AG04450 (cell line): ENCODE measurements at regions of chr3 and their contacts with region 1.

Region 1: GRCh38 chr3:47989981-47990440 is 26.2 kb downstream of the MAP4 start:
- DNase-seq: peak; percentile 88
- H3K4me3 ChIP-seq: no peak overlapping the region
- H3K27ac ChIP-seq: no peak overlapping the region
- H3K27me3 ChIP-seq: no peaks in the 10 kb centered on the region
- CTCF ChIP-seq: peak; percentile 89

Region 2: GRCh38 chr3:47971081-47971480 is 18.9 kb before region 1 on chr3:
- CTCF ChIA-PET with region 1: interaction called, 11 read pairs
- POLR2A ChIA-PET with region 1: no interaction called
- DNase-seq: no peak
- H3K4me3 ChIP-seq: no peak overlapping the region
- H3K27ac ChIP-seq: no peak overlapping the region
- H3K27me3 ChIP-seq: no peaks in the 10 kb centered on the region
- CTCF ChIP-seq: no peak

Region 3: GRCh38 chr3:48001991-48002390 is 12.0 kb after region 1 on chr3:
- CTCF ChIA-PET with region 1: interaction called, 42 read pairs
- POLR2A ChIA-PET with region 1: no interaction called
- DNase-seq: no peak
- H3K4me3 ChIP-seq: no peak overlapping the region
- H3K27ac ChIP-seq: no peak overlapping the region
- H3K27me3 ChIP-seq: no peaks in the 10 kb centered on the region
- CTCF ChIP-seq: no peak

Region 4: GRCh38 chr3:48151058-48151806 is 161.2 kb after region 1 on chr3:
- CTCF ChIA-PET with region 1: interaction called, 24 read pairs
- POLR2A ChIA-PET with region 1: no interaction called
- DNase-seq: peak; percentile 66
- H3K4me3 ChIP-seq: no peak overlapping the region
- H3K27ac ChIP-seq: no peak overlapping the region
- H3K27me3 ChIP-seq: no peaks in the 10 kb centered on the region
- CTCF ChIP-seq: peak; percentile 82

Region 5: DNA sequence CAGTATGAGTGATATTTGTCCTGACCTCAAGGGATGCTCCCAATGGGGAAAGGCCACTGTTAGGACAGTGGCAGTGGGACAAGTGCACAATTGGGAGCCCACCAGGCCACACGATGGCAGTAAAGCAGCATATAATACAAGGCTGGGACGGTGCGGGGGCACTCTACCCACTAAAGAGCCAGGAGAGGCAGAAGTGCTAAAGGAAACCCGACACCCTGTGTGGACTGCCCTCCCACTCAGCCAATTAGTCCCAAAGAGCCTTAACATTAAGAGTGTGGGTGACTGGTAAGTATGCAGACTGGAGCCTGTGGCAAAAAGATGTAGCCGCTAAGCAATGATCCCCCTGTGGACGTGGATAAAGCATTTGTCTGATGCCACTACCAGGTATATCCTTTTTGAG is 242.7 kb after region 1 on chr3:
- CTCF ChIA-PET with region 1: no interaction called
- POLR2A ChIA-PET with region 1: no interaction called
- DNase-seq: no peak
- H3K4me3 ChIP-seq: no peak overlapping the region
- H3K27ac ChIP-seq: no peak overlapping the region
- H3K27me3 ChIP-seq: no peaks in the 10 kb centered on the region
- CTCF ChIP-seq: peak; percentile 46